Motor neuron (in vitro differentiated cells): ENCODE measurements at regions of chr9 and their contacts with region 1.

Region 1: DNA sequence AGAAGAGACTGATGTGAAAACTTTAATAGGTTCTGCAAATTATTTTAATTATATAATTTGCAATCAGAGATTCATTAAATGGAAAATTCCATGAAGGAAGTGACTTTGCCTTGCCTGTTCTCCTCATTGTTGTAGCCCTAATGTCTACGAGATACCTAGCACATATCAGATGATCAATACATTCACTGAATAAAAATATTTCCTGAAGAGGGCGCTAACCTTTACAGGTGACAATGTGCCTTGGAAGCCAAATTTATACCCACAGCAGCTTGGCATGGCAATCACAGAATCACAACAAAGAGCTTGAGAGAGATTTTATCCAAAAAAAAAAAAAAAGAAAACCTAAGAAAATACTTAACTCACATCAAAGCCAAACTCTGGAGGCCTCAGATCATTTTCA is 17.4 kb downstream of the HAUS6 start:
- ATAC-seq: no peak
- H3K4me3 ChIP-seq: no peak overlapping the region
- H3K27ac ChIP-seq: no peak overlapping the region
- H3K4me1 ChIP-seq: no peaks in the 10 kb centered on the region

Region 2: DNA sequence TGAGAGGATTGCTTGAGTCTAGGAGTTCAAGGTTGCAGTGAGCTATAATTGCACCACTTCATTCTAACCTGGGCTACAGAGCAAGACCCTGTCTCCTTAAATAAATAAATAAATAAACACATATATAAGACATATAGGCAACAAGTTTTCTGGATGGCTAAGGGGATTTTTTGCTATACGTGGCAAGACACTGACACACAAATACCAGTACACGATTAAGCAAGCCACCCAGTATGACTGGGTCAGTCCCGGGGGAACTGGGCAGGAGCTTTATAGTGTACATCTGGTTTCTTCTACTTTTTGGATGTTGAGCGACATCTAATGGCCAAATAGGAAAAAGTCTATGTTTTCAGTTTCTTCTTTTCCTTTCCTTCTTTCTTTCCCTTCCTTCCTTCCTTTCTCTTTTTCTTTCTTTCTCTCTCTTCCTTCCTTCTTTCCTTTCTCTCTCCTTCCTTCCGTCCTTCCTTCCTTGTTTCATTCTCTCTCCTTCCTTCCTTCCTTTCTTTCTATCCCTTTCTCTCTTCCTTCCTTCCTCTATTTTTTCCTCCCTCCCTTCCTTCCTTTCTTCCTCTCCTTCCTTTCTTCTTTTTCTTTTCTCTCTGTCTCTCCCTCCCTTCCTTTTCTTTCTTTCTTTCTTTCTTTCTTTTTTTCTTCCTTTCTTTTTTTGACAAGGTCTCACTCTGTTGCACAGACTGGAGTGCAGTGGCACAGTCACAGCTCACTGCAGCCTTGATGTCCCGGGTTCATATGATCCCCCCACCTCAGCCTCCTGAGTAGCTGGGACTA is 89.0 kb after region 1 on chr9:
- in situ Hi-C with region 1: loop called in 1 of 9 experiments (anchors 10 kb)
- ATAC-seq: peak in 7 of 8 experiments; percentile 46 to 97 (median 62)
- H3K4me3 ChIP-seq: no peak overlapping the region
- H3K27ac ChIP-seq: no peak overlapping the region
- H3K4me1 ChIP-seq: no peaks in the 10 kb centered on the region